AG04450 (cell line): ENCODE measurements at regions of chr12 and their contacts with region 1.

Region 1: GRCh38 chr12:71746983-71747611 is 7.6 kb upstream of the RAB21 start:
- DNase-seq: peak; percentile 42
- H3K4me3 ChIP-seq: no peak overlapping the region
- H3K27ac ChIP-seq: no peak overlapping the region
- H3K27me3 ChIP-seq: peaks cover 18% of the 10 kb centered on the region
- CTCF ChIP-seq: peak; percentile 76

Region 2: DNA sequence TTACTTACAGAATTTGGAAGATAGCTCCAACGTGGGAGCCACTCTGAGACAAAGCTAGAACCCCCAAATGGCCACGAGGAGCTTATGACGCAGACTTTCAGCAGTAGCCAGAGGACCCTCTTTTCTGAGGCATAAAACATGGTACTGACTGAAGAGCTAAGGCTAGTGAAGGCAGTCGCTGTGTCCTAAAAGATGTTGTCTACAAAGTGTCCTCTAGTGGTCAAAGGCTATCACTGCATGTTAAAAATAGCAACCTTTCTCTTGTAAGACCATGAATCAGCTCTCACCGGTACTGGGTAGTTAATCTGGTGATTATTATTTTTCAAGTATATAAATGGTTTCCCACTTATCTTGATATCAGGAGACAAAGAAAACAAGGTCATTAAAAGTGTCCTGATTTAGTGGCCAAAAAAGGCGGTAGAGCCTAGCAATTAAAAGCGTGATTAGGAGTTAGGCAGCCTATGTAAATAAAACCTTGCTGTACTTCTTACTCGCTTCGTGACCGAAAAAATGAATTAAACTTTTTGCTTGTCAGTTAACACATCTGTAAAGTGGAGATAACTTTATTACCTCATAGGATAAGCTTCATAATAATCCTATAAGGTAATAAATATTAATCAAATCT is 354.5 kb before region 1 on chr12:
- CTCF ChIA-PET with region 1: interaction called, 20 read pairs
- POLR2A ChIA-PET with region 1: no interaction called
- DNase-seq: peak; percentile 37
- H3K4me3 ChIP-seq: no peak overlapping the region
- H3K27ac ChIP-seq: no peak overlapping the region
- H3K27me3 ChIP-seq: no peaks in the 10 kb centered on the region
- CTCF ChIP-seq: peak; percentile 88

Region 3: DNA sequence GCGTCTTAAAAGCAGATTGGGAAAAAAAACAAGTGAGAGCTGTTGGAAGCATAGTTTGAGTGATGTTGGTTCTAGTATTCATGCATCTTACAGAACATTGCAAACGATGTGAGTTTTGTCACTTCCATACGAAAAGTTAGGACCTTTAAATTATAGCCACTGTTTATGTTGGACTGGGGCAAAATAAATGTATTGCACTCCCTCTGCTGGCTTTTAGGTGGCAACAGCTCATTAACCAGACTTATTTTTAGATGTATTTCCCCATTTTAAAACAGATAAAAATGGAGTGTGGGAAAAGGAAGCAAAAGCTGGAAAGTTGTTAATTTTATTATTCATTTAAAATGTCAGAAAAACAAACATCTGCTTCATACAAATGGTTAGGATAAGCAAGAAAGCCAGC is 195.6 kb before region 1 on chr12:
- CTCF ChIA-PET with region 1: interaction called, 11 read pairs
- POLR2A ChIA-PET with region 1: no interaction called
- DNase-seq: no peak
- H3K4me3 ChIP-seq: no peak overlapping the region
- H3K27ac ChIP-seq: no peak overlapping the region
- H3K27me3 ChIP-seq: no peaks in the 10 kb centered on the region
- CTCF ChIP-seq: peak; percentile 56

Region 4: GRCh38 chr12:71626098-71626497 is 121.0 kb before region 1 on chr12:
- CTCF ChIA-PET with region 1: interaction called, 11 read pairs
- POLR2A ChIA-PET with region 1: interaction called, 3 read pairs
- DNase-seq: no peak
- H3K4me3 ChIP-seq: no peak overlapping the region
- H3K27ac ChIP-seq: no peak overlapping the region
- H3K27me3 ChIP-seq: no peaks in the 10 kb centered on the region
- CTCF ChIP-seq: no peak

Region 5: GRCh38 chr12:71645268-71645667 is 101.8 kb before region 1 on chr12:
- CTCF ChIA-PET with region 1: interaction called, 22 read pairs
- POLR2A ChIA-PET with region 1: interaction called, 3 read pairs
- DNase-seq: no peak
- H3K4me3 ChIP-seq: no peak overlapping the region
- H3K27ac ChIP-seq: no peak overlapping the region
- H3K27me3 ChIP-seq: no peaks in the 10 kb centered on the region
- CTCF ChIP-seq: no peak

Region 6: GRCh38 chr12:71685914-71686665 is 61.0 kb before region 1 on chr12 and contains the start of gene TMEM19:
- CTCF ChIA-PET with region 1: interaction called, 16 read pairs
- POLR2A ChIA-PET with region 1: interaction called, 12 read pairs
- DNase-seq: peak; percentile 62
- H3K4me3 ChIP-seq: peak within 1 kb of the TSS; percentile 84
- H3K27ac ChIP-seq: no peak within 1 kb of the TSS
- H3K27me3 ChIP-seq: no peaks in the 10 kb centered on the region
- CTCF ChIP-seq: peak; percentile 36
- polyA plus RNA-seq, gene TMEM19: 18.8 and 23.3 TPM in 2 replicates

Region 7: DNA sequence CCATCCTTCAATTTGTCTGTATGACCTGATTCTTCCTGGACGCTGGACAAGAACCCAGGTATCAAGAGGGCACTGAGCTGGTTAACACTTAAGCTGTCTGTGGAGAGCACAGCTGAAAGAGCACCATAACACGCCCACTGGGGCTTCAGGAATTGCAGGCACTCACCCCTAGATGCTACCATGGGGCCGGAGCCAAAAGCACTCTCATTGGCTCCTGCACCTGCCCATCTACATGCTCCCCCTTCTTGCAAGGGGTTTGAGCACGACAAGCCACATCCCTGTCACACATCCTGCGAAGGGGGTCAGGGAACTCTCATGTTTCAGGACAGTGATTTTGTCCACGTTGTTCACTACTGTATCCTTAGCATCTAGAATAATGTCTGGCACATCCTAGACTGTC is 57.4 kb after region 1 on chr12:
- CTCF ChIA-PET with region 1: no interaction called
- POLR2A ChIA-PET with region 1: no interaction called
- DNase-seq: no peak
- H3K4me3 ChIP-seq: no peak overlapping the region
- H3K27ac ChIP-seq: no peak overlapping the region
- H3K27me3 ChIP-seq: peaks cover 4% of the 10 kb centered on the region
- CTCF ChIP-seq: no peak

Region 8: GRCh38 chr12:72010356-72010755 is 263.3 kb after region 1 on chr12:
- CTCF ChIA-PET with region 1: no interaction called
- POLR2A ChIA-PET with region 1: no interaction called
- DNase-seq: no peak
- H3K4me3 ChIP-seq: no peak overlapping the region
- H3K27ac ChIP-seq: no peak overlapping the region
- H3K27me3 ChIP-seq: peaks cover 16% of the 10 kb centered on the region
- CTCF ChIP-seq: no peak